Dorsolateral prefrontal cortex (tissue), 120 donors: ENCODE measurements at regions of chr22 and their contacts with region 1.

Region 1: DNA sequence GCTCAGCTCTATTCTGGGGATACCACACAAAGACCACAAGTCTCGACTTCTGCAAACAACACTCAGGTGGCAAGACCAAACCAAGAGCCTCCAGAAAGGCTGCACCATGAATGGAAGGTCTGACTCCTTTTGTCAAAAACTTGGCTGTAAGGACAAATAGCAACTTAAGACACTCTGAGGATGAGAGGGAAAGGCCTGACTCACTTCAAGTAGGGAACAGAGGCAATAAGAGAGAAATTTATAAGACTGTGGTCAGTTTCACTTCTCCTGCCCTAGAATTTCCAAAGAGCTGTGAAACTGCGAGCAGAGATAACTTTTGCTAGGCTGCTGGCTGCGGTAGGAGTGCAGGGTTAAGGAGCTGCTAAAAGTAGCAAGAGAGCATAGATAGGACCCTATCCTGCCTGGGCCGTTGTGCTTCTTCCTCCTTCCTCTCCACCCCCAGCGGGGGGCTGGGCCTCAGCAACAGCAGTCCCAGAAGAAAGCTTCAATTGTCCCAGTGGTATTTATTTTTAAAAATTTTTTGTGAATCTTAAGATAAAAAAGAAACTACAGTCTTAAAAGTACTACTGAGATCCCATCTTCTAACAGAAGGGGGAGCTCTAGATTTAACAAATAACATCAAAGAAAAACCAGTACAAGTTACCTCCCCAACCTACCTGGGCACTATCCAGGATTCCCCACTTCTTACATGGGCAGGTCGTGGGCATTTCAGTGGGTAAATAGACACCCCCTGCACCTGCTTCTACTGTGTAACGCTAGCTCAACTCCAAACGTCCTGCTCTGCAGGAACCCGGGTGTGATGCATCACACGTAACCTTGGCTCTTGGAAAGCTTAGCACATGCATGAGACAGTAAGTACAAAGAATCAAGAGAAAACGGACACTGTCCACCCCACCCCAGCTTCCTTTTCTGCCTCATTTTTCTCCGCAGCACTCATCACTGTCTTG is 66.4 kb downstream of the SGSM3 start:
- DNase-seq: no peak
- H3K4me3 ChIP-seq: peak overlapping the region in 46 of 59 donors; percentile 0 to 56 (median 24)
- H3K27ac ChIP-seq: peak overlapping the region in 51 of 59 donors; percentile 1 to 81 (median 54)
- H3K27me3 ChIP-seq: no peaks in the 10 kb centered on the region
- CTCF ChIP-seq: peak; percentile 60 to 86 (median 78)

Region 2: GRCh38 chr22:40484906-40485669 is 48.3 kb after region 1 on chr22:
- intact Hi-C with region 1: loop called in 1 of 2 experiments (anchors 5 kb)
- DNase-seq: no peak
- H3K4me3 ChIP-seq: no peak overlapping the region
- H3K27ac ChIP-seq: peak overlapping the region in 14 of 59 donors; percentile 5 to 57 (median 14)
- H3K27me3 ChIP-seq: no peaks in the 10 kb centered on the region
- CTCF ChIP-seq: no peak

Region 3: DNA sequence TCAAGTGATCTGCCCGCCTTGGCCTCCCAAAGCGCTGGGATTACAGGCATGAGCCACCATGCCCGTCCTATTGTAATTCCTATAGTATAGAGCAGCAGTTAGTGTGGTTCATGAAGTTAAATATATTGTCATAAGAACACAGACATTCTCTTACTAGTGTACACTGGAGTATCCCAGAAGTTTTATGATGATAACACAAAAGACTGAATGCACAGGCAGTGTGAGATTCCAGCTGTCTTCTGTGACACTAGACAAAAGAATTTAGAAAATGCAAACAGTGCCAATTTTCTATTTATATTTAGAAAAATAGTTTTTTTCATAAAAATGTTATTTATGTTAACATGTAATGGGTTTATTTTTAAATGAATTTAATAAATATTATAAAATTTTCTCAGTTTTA is 475.0 kb after region 1 on chr22:
- intact Hi-C with region 1: no loop called
- DNase-seq: no peak
- H3K4me3 ChIP-seq: no peak overlapping the region
- H3K27ac ChIP-seq: no peak overlapping the region
- H3K27me3 ChIP-seq: no peaks in the 10 kb centered on the region
- CTCF ChIP-seq: no peak